AG04449 (cell line): ENCODE measurements at regions of chr1 and their contacts with region 1.

Region 1: GRCh38 chr1:212368073-212368484 is 46.6 kb downstream of the PACC1 start:
- DNase-seq: peak; percentile 23
- H3K4me3 ChIP-seq: no peak overlapping the region
- CTCF ChIP-seq: peak; percentile 81

Region 2: DNA sequence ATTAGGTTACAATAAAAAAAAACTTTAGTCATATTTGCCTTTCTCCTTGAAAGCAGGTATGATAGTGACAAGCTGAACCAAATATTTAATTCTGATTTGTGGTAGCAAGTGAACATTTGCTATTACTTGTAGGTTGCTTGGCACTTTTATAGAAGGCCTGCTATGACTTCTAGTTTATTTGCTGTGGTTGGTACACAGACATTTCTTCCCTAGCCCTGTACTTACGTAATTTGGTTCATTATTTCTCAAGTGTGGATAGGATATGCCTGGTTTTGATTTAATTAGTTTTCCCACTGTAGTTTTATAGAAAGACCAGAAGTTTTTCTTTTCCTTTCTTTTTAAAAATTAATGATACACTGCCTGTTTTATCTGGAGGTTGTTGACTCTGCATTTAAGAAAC is 27.0 kb before region 1 on chr1:
- CTCF ChIA-PET with region 1: interaction called, 12 read pairs
- POLR2A ChIA-PET with region 1: no interaction called
- DNase-seq: no peak
- H3K4me3 ChIP-seq: no peak overlapping the region
- CTCF ChIP-seq: no peak

Region 3: GRCh38 chr1:212353181-212353580 is 14.9 kb before region 1 on chr1:
- CTCF ChIA-PET with region 1: interaction called, 10 read pairs
- POLR2A ChIA-PET with region 1: no interaction called
- DNase-seq: no peak
- H3K4me3 ChIP-seq: no peak overlapping the region
- CTCF ChIP-seq: no peak

Region 4: GRCh38 chr1:212381397-212382035 is 13.4 kb after region 1 on chr1:
- CTCF ChIA-PET with region 1: interaction called, 31 read pairs
- POLR2A ChIA-PET with region 1: interaction called, 3 read pairs
- DNase-seq: no peak
- H3K4me3 ChIP-seq: no peak overlapping the region
- CTCF ChIP-seq: no peak

Region 5: DNA sequence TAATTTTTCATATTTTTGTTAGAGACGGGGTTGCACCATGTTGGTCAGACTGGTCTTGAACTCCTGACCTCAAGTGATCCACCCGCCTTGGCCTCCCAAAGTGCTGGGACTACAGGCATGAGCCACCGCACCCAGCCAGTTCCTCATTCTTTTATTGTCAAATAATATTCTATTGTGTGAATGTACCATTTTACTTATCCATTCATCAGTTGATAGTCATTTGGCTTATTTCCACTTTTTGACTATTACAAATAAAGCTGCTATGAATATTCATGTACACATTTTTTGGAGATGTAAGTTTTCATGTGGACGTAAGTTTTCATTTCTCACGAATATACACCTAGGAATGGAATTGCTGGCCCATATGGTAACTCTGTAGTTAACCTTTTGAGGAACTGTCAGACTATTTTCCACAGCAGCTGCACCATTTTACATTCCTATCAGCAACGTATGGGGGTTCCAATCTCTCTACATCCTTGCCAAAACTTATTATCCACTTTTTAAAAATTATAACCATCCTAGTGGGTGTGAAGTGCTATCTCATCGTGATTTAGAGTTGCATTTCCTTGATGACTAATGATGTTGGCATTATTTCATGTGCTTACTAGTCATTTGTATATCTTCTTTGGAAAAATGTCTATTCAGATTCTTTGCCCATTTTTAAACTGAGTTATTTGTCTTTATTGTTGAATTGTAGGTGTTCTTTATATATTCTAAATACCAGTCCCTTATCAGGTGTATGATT is 33.9 kb after region 1 on chr1:
- CTCF ChIA-PET with region 1: no interaction called
- POLR2A ChIA-PET with region 1: no interaction called
- DNase-seq: no peak
- H3K4me3 ChIP-seq: no peak overlapping the region
- CTCF ChIP-seq: no peak

Region 6: GRCh38 chr1:212558693-212559480 is 190.8 kb after region 1 on chr1:
- CTCF ChIA-PET with region 1: no interaction called
- POLR2A ChIA-PET with region 1: no interaction called
- DNase-seq: peak; percentile 54
- H3K4me3 ChIP-seq: peak overlapping the region; percentile 66
- CTCF ChIP-seq: no peak